ENCODE measurements at regions of chr10 and their contacts with region 1.

Region 1: DNA sequence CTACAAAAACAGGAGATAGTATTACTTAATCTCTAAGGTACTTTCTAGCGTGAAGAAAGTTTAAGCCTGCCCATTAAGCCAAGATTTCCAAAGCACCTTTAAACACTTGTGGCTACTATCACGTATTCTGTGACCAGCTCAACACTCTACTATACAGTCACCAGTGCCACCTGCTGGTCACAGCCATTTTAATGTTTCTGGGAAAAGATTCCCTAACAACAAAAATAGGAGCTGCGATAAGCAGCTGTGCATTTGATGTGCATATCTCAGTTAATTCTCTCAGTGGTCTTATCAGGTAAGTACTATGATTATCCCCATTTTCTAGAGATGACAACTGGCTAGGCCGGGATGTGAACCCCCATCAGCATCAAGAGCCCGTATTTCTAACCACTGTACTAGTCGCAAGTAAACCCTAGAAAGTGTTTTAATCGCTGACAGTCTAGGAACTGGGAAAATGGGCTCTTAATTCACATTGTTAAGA is 860 bp downstream of the SEC31B start:
- DNase-seq: no peak
- H3K4me3 ChIP-seq: no peak overlapping the region
- H3K27me3 ChIP-seq: no peaks in the 10 kb centered on the region
- CTCF ChIP-seq: peak; percentile 73

Region 2: GRCh38 chr10:100433253-100434240 is 85.3 kb before region 1 on chr10:
- CTCF ChIA-PET with region 1: interaction called, 38 read pairs
- POLR2A ChIA-PET with region 1: no interaction called
- DNase-seq: peak; percentile 41
- H3K4me3 ChIP-seq: no peak overlapping the region
- H3K27me3 ChIP-seq: no peaks in the 10 kb centered on the region; the same call in 1 of the 2 replicates
- CTCF ChIP-seq: peak; percentile 94

Region 3: DNA sequence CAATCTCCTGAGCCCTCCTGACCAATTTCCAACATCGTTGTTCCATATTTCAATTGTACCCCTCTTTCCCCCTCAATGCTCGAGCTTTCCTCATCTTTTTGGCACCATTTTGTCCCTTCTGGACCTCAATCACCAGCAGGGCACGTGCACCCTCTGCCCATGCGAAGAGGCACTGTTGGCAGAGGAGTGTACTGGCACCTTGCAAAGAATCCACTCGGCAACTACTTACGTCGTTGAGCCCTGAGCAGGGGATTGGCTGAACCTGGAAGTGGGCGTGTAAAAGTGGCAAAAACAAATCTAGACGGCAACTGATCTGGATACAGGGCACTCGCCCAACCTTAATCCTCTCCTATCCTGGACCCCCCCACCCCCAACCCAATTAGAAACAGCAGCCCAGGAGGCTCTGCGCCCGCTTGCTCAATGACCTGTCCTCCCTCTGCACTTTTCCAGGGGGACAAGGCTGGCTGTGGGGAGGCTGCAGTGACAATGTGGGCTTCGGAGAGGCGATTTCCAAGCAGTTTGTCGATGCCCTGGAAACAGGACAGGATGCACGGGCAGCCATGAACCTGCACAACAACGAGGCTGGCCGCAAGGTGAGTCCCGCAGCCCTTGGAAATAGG is 37.2 kb before region 1 on chr10:
- CTCF ChIA-PET with region 1: interaction called, 386 read pairs
- POLR2A ChIA-PET with region 1: no interaction called
- DNase-seq: peak; percentile 52
- H3K4me3 ChIP-seq: peak overlapping the region; percentile 21
- H3K27me3 ChIP-seq: peaks cover 18% of the 10 kb centered on the region
- CTCF ChIP-seq: no peak

Region 4: DNA sequence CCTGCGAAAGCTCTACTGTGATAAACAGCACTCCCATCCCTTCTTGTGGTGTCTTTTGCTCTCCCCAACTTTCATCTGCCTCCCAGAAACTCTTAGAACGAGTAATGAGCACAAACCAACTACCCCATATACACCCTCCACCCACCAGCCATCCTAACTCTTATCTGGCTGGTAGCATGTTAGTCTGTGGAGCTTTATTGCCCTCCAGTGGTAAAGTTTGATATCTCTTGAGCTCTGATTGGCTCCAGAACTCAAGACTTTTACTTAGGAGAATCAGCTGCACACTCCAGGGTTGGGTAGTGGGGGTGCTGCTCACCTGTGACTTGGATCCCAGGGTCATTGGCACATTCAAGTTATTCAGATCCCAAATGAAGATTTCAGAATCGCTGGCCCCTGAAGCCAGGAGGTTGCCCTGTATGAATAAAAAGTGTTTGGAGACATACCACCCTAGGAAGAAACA is 10.1 kb before region 1 on chr10:
- CTCF ChIA-PET with region 1: interaction called, 54 read pairs
- POLR2A ChIA-PET with region 1: interaction called, 11 read pairs
- DNase-seq: no peak
- H3K4me3 ChIP-seq: no peak overlapping the region
- H3K27me3 ChIP-seq: no peaks in the 10 kb centered on the region
- CTCF ChIP-seq: peak; percentile 73

Region 5: DNA sequence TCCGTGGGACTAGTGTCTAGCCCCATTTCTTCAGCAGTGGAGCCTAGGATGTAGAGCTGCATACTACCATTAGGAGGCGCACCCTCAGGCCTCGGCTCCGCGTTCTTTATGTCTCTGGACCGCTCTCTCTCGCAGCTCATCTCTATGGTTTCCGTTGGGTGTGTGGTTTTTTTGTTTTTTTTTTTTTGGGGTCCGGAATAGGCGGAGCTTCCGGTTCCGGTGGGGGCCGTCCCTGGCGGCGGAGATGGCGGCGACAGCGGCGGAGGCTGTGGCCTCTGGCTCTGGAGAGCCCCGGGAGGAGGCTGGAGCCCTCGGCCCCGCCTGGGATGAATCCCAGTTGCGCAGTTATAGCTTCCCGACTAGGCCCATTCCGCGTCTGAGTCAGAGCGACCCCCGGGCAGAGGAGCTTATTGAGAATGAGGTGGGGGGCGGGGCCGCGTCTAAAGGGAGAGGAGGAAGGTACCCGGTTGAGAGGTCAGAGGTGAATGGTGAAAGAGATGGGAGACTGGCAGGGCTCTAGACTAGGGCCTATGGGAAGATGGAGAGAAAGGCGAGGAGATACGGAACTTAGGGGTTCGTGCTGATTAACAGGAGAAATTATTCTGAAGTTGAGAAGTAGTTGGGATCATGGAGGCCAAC is 17.0 kb after region 1 on chr10 and contains the start of gene HIF1AN:
- CTCF ChIA-PET with region 1: interaction called, 21 read pairs
- POLR2A ChIA-PET with region 1: no interaction called
- DNase-seq: peak; percentile 54
- H3K4me3 ChIP-seq: peak within 1 kb of the TSS; percentile 69
- H3K27me3 ChIP-seq: no peaks in the 10 kb centered on the region
- CTCF ChIP-seq: peak; percentile 98
- polyA plus RNA-seq, gene HIF1AN: 7.4 and 19.5 TPM in 2 replicates

Region 6: GRCh38 chr10:100683545-100684300 is 164.9 kb after region 1 on chr10:
- CTCF ChIA-PET with region 1: no interaction called
- POLR2A ChIA-PET with region 1: no interaction called
- DNase-seq: no peak
- H3K4me3 ChIP-seq: no peak overlapping the region
- H3K27me3 ChIP-seq: peaks cover 38% of the 10 kb centered on the region
- CTCF ChIP-seq: no peak

Region 7: GRCh38 chr10:100725071-100725471 is 206.3 kb after region 1 on chr10:
- CTCF ChIA-PET with region 1: no interaction called
- POLR2A ChIA-PET with region 1: no interaction called
- DNase-seq: no peak
- H3K4me3 ChIP-seq: no peak overlapping the region
- H3K27me3 ChIP-seq: peaks cover 49% of the 10 kb centered on the region
- CTCF ChIP-seq: no peak